ENCODE measurements at regions of chr11 and their contacts with region 1.

Region 1: GRCh38 chr11:73404048-73404447 is 27.8 kb downstream of the RELT start:
- DNase-seq: no peak
- H3K4me3 ChIP-seq: no peak overlapping the region
- H3K27ac ChIP-seq: no peak overlapping the region
- H3K4me1 ChIP-seq: no peaks in the 10 kb centered on the region
- H3K27me3 ChIP-seq: no peaks in the 10 kb centered on the region
- CTCF ChIP-seq: peak in 3 of 4 experiments; percentile 32 to 72 (median 71)
- POLR2A ChIP-seq: no peak

Region 2: DNA sequence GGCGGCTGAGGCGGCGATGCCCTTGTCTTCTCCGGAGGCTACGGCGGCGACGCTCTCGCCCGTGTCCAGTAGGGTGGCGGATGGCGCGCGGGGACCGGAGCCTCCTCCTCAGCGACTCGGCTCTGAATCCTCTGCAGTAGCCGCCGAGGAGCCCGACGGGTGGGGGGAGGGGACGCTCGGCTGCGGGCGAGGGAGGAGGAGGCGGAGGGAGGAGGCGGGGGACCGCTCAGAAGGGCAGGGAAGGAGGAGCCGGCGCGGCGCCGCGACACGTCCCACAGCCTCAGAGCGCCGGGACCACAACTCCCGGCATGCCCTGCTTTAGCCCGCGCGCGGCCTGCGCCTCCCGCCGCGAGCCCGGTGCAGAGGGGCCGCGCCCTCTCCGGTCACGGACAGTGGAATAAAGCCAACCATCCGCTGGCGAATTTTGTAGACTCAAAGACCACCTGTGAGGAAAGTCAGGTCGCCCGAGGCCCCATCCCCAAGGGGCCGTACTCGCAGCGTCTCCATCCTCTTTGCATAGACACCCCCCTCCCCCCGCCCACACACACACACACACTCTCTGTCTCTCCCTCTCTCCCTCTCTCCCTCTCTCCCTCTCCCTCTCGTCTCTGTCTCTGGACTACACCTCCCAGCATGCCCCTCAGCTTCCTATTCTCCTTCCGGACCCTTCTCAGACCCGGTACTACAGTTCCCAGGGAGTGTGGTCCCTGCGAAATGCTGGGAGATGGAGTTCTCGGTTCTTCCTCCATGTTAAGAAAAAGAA is 194.1 kb after region 1 on chr11 and contains the start of gene FAM168A:
- intact Hi-C with region 1: loop called (anchors 5 kb)
- DNase-seq: peak; percentile 96
- H3K4me3 ChIP-seq: peak within 1 kb of the TSS; percentile 88 to 96
- H3K27ac ChIP-seq: peak within 1 kb of the TSS; percentile 86
- H3K4me1 ChIP-seq: peaks cover 7% of the 10 kb centered on the region
- H3K27me3 ChIP-seq: no peaks in the 10 kb centered on the region
- CTCF ChIP-seq: peak in 2 of 4 experiments; percentile 45 to 54
- POLR2A ChIP-seq: peak; percentile 79
- total RNA-seq, gene FAM168A: 27.3 to 38.3 TPM

Region 3: GRCh38 chr11:73625696-73626318 is 221.8 kb after region 1 on chr11:
- intact Hi-C with region 1: loop called (anchors 10 kb)
- DNase-seq: peak; percentile 68
- H3K4me3 ChIP-seq: no peak overlapping the region
- H3K27ac ChIP-seq: no peak overlapping the region
- H3K4me1 ChIP-seq: no peaks in the 10 kb centered on the region
- H3K27me3 ChIP-seq: no peaks in the 10 kb centered on the region
- CTCF ChIP-seq: peak; percentile 66 to 87 (median 83)
- POLR2A ChIP-seq: no peak

Region 4: DNA sequence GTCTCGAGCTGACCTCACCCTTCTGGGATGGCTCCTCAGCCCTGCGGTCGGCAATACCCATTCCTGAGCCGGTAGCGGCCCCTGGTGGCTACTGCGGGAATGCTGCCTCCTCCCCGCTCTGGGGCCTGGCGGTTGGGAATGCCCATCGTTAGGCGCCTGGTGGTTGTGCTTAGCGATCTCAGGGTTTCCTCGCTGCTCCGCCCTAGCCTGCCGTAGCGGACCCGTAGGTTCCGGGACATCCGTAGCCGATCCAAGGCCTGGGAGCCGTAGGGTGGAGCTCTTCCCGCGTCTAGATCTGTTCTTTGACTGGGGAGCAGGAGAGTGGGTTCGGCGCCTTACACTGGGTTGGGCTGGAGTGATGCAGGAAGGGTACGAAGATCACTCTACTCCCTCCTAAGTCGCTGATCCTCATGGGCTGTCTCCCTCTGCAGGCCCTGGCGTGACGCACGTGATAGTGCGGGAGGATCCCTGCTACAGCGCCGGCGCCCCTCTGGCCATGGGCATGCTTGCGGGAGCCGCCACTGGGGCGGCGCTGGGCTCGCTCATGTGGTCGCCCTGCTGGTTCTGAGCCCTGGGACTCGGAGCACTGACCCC is 257.1 kb after region 1 on chr11:
- intact Hi-C with region 1: loop called (anchors 1 kb)
- DNase-seq: peak; percentile 83
- H3K4me3 ChIP-seq: peak overlapping the region; percentile 16 to 20
- H3K27ac ChIP-seq: peak overlapping the region in 1 of 2 donors; percentile 25
- H3K4me1 ChIP-seq: no peaks in the 10 kb centered on the region
- H3K27me3 ChIP-seq: no peaks in the 10 kb centered on the region
- CTCF ChIP-seq: peak; percentile 89 to 99 (median 94)
- POLR2A ChIP-seq: no peak

Region 5: DNA sequence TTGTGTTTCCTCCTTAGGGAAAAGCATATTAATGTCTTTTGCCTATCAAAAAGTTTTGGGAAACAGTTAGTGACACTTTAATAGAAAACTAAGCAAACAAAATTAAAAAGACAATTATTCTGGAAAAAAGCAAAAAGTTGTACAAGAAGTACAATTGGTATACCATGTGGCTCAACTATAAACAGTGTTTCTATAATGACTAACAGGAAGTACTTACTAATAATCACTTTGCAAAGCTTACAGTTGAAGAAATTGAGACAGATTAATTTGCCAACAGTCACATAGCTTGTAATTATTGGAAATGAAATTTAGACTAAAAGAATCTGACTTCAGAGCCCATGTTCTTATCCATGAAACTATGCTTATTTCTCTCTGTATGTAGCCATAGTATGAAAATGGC is 791.8 kb after region 1 on chr11:
- intact Hi-C with region 1: no loop called
- DNase-seq: no peak
- H3K4me3 ChIP-seq: no peak overlapping the region
- H3K27ac ChIP-seq: no peak overlapping the region
- H3K4me1 ChIP-seq: no peaks in the 10 kb centered on the region
- H3K27me3 ChIP-seq: no peaks in the 10 kb centered on the region
- CTCF ChIP-seq: no peak
- POLR2A ChIP-seq: no peak

Measured in prostate gland (tissue), 2 donors.